PC-3 (cell line): ENCODE measurements at regions of chr1 and their contacts with region 1.

Region 1: DNA sequence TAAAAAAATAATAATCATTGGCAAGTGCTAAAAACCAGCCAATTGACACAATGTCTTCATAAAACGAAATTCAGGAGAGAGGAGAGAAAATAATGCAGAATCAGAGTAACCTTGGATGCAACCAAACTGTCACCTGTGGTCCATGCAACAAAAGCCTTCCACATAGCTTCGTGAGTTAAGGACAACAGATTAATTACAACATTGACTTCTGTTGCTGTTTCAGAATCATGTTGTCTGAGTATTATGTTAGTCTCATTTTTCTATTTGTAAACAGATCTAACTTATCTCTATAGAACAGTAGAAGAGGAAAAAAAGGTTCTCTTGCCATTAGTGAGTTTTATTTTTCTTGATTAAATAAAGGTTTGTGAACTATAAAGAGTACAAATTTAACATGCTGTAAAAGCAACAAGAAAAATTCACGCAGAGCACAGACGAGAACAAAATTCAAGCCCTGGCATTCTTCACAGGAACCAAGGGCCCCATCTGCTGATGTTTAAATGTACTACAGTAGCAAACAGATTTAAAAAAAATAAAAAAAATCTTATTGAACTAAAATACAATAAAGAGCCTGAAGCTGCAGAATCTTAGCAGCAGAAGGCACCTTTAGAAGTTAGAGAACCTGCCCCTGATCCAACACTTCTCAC is 381.1 kb upstream of the PKN2 start:
- DNase-seq: peak; percentile 51
- ATAC-seq: peak; percentile 62; the same call in 1 of the 2 replicates
- H3K4me3 ChIP-seq: no peak overlapping the region
- H3K27ac ChIP-seq: no peak overlapping the region
- H3K4me1 ChIP-seq: no peaks in the 10 kb centered on the region
- H3K27me3 ChIP-seq: no peaks in the 10 kb centered on the region
- CTCF ChIP-seq: peak; percentile 65

Region 2: DNA sequence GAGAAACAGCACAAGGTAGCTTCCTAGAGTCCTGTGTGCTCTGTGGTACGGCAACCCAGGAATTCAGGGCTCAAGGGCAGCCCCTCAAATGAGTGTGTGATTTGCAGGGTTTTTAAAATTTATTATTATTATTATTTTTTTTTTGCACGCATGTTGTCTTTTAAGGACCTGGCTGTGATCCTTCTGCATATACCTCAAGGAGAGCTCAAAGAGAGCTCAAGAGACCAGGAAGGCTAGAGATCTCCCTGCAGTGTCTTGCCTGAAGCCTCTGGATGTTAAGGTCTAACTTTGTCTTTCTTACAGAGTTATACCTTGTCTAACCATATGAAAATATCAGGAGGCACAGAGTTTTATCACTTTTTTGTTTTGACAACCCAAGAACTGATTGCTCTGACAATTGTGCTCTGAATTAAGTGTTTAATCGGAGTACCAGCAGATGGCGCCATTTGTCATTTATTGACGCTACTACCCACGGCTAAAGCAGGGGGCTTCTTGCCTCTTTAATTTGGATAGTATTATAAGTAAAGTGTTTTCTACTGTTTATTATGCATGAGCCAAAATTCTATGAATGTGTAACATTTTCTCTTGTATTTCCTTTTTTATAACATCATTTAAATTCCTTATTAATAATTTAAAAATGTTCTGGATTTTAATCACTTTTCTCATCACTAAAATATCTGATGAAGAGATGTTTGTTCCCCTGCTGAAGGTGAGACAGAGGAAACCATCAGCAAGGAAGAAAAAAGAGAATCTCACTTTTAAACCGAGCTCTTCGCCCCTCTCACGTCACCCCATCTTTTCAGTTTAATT is 1010.1 kb before region 1 on chr1:
- CTCF ChIA-PET with region 1: no interaction called
- POLR2A ChIA-PET with region 1: no interaction called
- intact Hi-C with region 1: loop called (anchors 5 kb)
- DNase-seq: peak; percentile 75
- ATAC-seq: peak; percentile 70
- H3K4me3 ChIP-seq: no peak overlapping the region
- H3K27ac ChIP-seq: no peak overlapping the region
- H3K4me1 ChIP-seq: no peaks in the 10 kb centered on the region
- H3K27me3 ChIP-seq: no peaks in the 10 kb centered on the region
- CTCF ChIP-seq: peak; percentile 91

Region 3: DNA sequence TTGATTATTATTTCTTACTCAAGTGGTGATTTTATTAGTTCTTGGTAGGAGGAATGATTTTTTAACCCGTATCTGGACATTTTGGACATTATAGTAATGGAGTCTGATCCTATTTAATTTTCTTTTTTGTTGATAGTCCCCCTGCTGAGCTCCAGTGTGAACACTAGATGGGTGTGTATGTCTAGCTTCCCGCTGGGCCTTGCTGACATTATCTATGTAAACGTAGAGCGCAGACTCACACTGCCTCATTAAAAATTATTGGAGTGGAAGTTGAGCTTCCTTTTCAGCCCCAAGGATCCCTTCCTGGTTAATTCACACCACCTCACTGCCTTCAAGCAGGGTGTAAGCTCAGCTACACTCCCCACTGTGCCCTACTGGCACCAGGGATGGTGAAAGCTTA is 86.5 kb before region 1 on chr1:
- CTCF ChIA-PET with region 1: interaction called, 3 read pairs
- POLR2A ChIA-PET with region 1: no interaction called
- intact Hi-C with region 1: loop called (anchors 2 kb)
- DNase-seq: peak; percentile 14
- ATAC-seq: peak; percentile 74
- H3K4me3 ChIP-seq: no peak overlapping the region
- H3K27ac ChIP-seq: no peak overlapping the region
- H3K4me1 ChIP-seq: no peaks in the 10 kb centered on the region
- H3K27me3 ChIP-seq: no peaks in the 10 kb centered on the region
- CTCF ChIP-seq: peak; percentile 38; the same call in 1 of the 2 replicates